Endothelial cell of umbilical vein (primary cell): ENCODE measurements at regions of chr1 and their contacts with region 1.

Region 1: DNA sequence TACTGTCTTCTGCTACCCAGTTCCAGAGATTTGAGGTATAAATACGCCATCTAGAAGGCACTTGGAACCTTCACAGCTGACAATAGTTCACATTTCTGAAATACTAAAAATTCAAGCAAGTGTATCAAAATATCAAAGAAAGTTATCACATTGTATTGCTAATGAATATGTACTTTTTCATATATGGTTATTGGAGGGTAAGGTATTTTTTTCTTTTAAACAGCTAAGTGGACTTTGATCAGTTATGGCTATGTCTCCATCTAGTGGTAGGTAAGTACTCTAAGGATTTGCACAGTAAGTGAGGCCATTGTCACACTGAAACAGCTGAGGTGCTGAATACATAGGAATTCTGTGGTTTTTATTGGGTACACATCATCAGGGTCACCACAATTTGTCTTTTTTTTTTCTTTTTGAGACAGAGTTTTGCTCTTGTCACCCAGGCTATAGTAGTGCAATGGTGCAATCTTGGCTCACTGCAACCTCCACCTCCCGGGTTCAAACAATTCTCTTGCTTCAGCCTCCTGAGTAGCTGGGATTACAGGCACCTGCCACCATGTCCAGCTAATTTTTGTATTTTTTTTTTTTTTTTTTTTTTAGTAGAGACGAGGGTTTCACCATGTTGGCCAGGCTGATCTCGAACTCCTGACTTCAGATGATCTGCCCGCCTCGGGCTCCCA is 49.1 kb upstream of the CR2 start:
- DNase-seq: peak; percentile 70
- H3K4me3 ChIP-seq: no peak overlapping the region
- H3K27ac ChIP-seq: no peak overlapping the region
- H3K4me1 ChIP-seq: peaks cover 5% of the 10 kb centered on the region
- H3K27me3 ChIP-seq: peaks cover 6 to 9% of the 10 kb centered on the region in 2 experiments
- CTCF ChIP-seq: peak; percentile 49 to 55
- POLR2A ChIP-seq: no peak

Region 2: GRCh38 chr1:207052911-207053769 is 351.8 kb before region 1 on chr1 and contains the start of gene PFKFB2:
- CTCF ChIA-PET with region 1: interaction called, 11 read pairs
- POLR2A ChIA-PET with region 1: no interaction called
- dilution Hi-C with region 1: no loop called
- intact Hi-C with region 1: loop called (anchors 1 kb)
- DNase-seq: peak; percentile 88
- H3K4me3 ChIP-seq: peak within 1 kb of the TSS; percentile 27 to 77 (median 62)
- H3K27ac ChIP-seq: no peak within 1 kb of the TSS
- H3K4me1 ChIP-seq: peaks cover 15% of the 10 kb centered on the region
- H3K27me3 ChIP-seq: peaks cover 0 to 2% of the 10 kb centered on the region in 2 experiments
- CTCF ChIP-seq: no peak
- POLR2A ChIP-seq: no peak
- total RNA-seq, gene PFKFB2: 1.8 and 2.0 TPM in 2 replicates

Region 3: DNA sequence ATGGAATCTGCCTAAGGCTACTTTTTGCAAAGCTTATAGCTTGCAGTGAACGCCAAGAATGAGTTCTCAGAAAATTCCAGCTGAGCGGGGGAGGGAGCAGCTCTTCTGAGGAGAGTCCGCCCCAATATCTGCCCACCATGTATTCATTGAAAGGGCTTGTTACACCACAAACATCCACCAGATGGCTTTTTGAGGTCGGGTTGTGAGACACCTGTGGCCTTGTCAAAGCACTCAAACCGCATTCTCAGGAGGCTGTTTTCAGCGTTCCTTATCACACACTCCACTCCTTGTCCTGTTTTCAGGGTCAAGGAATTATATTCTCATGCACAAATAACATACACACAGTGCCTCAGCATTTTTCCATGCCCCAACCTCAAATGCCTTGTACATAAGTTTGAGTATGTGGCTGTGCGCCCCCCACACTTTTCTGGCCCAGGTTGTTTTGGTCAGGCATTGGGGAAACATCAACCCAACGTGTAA is 320.2 kb before region 1 on chr1:
- CTCF ChIA-PET with region 1: interaction called, 181 read pairs
- POLR2A ChIA-PET with region 1: no interaction called
- dilution Hi-C with region 1: no loop called
- intact Hi-C with region 1: loop called (anchors 1 kb)
- DNase-seq: peak; percentile 75
- H3K4me3 ChIP-seq: no peak overlapping the region
- H3K27ac ChIP-seq: no peak overlapping the region
- H3K4me1 ChIP-seq: no peaks in the 10 kb centered on the region
- H3K27me3 ChIP-seq: peaks cover 2 to 3% of the 10 kb centered on the region in 2 experiments
- CTCF ChIP-seq: peak; percentile 39 to 63
- POLR2A ChIP-seq: no peak

Region 4: DNA sequence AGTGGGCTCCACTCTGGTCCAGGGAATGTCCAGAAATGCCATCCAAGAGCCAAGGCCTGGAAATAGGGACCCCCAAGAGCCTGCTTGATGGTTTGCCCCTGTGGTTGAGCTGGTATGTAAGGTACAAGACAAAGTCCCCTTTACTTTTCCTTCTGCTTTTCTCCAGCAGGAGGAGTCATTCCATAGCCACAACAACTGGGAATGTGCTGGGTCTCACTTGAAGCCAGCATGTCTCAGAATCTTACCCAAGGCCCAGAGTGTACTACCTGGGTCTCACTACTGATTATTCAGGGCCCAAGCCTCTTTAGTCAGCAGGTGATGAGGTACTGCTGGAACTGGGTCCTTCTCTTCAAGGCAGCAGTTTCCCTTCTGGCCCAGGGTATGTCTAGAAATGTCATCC is 145.6 kb before region 1 on chr1:
- CTCF ChIA-PET with region 1: interaction called, 149 read pairs
- POLR2A ChIA-PET with region 1: no interaction called
- dilution Hi-C with region 1: no loop called
- intact Hi-C with region 1: loop called (anchors 1 kb)
- DNase-seq: peak; percentile 78
- H3K4me3 ChIP-seq: no peak overlapping the region
- H3K27ac ChIP-seq: no peak overlapping the region
- H3K4me1 ChIP-seq: no peaks in the 10 kb centered on the region
- H3K27me3 ChIP-seq: no peaks in the 10 kb centered on the region
- CTCF ChIP-seq: peak; percentile 46 to 67
- POLR2A ChIP-seq: no peak